ENCODE measurements at regions of chr6 and their contacts with region 1.

Region 1: GRCh38 chr6:53725791-53726431 is 60.4 kb upstream of the KLHL31 start:
- H3K4me3 ChIP-seq: no peak overlapping the region
- H3K27ac ChIP-seq: no peak overlapping the region
- H3K4me1 ChIP-seq: peaks cover 6% of the 10 kb centered on the region; the same call in 1 of the 2 replicates
- CTCF ChIP-seq: peak; percentile 82

Region 2: GRCh38 chr6:52820198-52820597 is 905.7 kb before region 1 on chr6:
- CTCF ChIA-PET with region 1: no interaction called
- POLR2A ChIA-PET with region 1: no interaction called
- H3K4me3 ChIP-seq: no peak overlapping the region
- H3K27ac ChIP-seq: no peak overlapping the region
- H3K4me1 ChIP-seq: no peaks in the 10 kb centered on the region
- CTCF ChIP-seq: no peak

Region 3: GRCh38 chr6:53375847-53376246 is 350.1 kb before region 1 on chr6:
- CTCF ChIA-PET with region 1: no interaction called
- POLR2A ChIA-PET with region 1: no interaction called
- H3K4me3 ChIP-seq: no peak overlapping the region
- H3K27ac ChIP-seq: no peak overlapping the region
- H3K4me1 ChIP-seq: no peaks in the 10 kb centered on the region
- CTCF ChIP-seq: no peak

Region 4: DNA sequence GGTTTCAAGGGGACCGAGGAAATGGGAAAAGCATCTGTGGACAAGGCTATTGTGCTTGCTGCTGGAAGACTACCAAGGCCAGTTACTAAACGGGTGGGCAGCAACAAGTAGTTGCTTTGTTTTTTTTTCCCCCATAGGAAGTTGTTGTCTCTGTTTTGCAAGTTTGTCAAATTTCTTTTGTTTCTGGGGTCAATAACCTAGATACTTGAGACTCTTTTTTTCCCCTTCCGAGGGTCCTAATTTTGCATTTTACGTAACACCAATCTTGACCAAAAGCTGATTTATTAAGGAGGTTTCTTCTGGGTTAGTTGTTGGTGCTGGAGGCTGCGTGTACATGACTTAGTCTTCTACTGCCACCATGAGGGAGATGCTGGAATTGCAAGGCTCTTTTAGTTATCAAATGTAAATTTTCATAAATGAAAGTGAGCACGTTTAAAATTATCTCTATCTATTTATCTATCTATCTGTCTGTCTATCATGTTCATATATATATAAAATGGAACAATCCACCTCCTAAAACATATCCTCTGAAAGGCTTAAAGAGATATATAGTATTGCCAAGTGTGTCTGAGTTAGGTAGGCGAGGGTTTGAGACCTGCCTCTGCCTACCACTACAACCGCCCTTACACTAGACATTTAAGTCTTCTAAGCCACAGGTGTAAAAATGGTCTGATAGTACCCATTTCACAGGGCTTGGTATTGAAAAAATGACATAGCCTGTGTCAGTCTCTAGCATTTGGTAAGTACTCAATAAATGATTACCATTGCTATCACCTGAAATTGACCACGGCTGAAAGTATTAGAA is 241.2 kb before region 1 on chr6:
- CTCF ChIA-PET with region 1: interaction called, 10 read pairs
- POLR2A ChIA-PET with region 1: no interaction called
- H3K4me3 ChIP-seq: no peak overlapping the region
- H3K27ac ChIP-seq: no peak overlapping the region
- H3K4me1 ChIP-seq: peaks cover 6% of the 10 kb centered on the region; the same call in 1 of the 2 replicates
- CTCF ChIP-seq: peak; percentile 70; the same call in 1 of the 2 replicates

Region 5: GRCh38 chr6:53544470-53545308 is 181.2 kb before region 1 on chr6 and contains the start of gene GCLC:
- CTCF ChIA-PET with region 1: interaction called, 10 read pairs
- POLR2A ChIA-PET with region 1: no interaction called
- H3K4me3 ChIP-seq: peak within 1 kb of the TSS; percentile 91
- H3K27ac ChIP-seq: peak within 1 kb of the TSS; percentile 80
- H3K4me1 ChIP-seq: peaks cover 10% of the 10 kb centered on the region; the same call in 1 of the 2 replicates
- CTCF ChIP-seq: peak; percentile 87

Region 6: GRCh38 chr6:53658992-53659391 is 66.9 kb before region 1 on chr6:
- CTCF ChIA-PET with region 1: interaction called, 29 read pairs
- POLR2A ChIA-PET with region 1: interaction called, 3 read pairs
- H3K4me3 ChIP-seq: no peak overlapping the region
- H3K27ac ChIP-seq: no peak overlapping the region
- H3K4me1 ChIP-seq: no peaks in the 10 kb centered on the region
- CTCF ChIP-seq: no peak

Region 7: DNA sequence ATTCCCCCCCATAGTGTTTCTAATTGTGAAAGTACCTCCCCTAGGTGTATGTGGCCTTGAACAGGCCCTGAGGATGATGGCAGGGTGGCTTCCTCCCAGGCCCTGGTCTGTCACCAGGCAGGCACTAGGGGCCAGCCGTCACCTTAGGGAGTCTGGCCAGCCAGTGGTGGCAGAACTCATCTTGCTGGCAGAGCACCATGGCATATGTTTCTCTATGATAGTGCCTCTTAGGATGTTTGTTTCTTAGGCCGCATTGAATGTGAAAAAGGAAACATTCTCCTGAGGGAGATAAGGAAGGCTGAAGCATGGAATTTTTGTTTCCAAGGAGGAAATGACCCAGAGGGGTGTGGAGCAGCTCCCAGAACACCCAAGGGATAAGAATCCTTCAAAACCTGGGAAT is 15.1 kb before region 1 on chr6:
- CTCF ChIA-PET with region 1: interaction called, 47 read pairs
- POLR2A ChIA-PET with region 1: no interaction called
- H3K4me3 ChIP-seq: no peak overlapping the region
- H3K27ac ChIP-seq: no peak overlapping the region
- H3K4me1 ChIP-seq: 0 out of 2 replicates have a peak, but pooled peaks cover 6% of the 10 kb centered on the region
- CTCF ChIP-seq: no peak

Region 8: GRCh38 chr6:53943395-53943794 is 217.5 kb after region 1 on chr6:
- CTCF ChIA-PET with region 1: interaction called, 11 read pairs
- POLR2A ChIA-PET with region 1: no interaction called
- H3K4me3 ChIP-seq: no peak overlapping the region
- H3K27ac ChIP-seq: no peak overlapping the region
- H3K4me1 ChIP-seq: no peaks in the 10 kb centered on the region
- CTCF ChIP-seq: no peak

Measured in HEK293 (cell line).